Right ventricle myocardium superior (tissue), 1 donor: ENCODE measurements at regions of chr11 and their contacts with region 1.

Region 1: DNA sequence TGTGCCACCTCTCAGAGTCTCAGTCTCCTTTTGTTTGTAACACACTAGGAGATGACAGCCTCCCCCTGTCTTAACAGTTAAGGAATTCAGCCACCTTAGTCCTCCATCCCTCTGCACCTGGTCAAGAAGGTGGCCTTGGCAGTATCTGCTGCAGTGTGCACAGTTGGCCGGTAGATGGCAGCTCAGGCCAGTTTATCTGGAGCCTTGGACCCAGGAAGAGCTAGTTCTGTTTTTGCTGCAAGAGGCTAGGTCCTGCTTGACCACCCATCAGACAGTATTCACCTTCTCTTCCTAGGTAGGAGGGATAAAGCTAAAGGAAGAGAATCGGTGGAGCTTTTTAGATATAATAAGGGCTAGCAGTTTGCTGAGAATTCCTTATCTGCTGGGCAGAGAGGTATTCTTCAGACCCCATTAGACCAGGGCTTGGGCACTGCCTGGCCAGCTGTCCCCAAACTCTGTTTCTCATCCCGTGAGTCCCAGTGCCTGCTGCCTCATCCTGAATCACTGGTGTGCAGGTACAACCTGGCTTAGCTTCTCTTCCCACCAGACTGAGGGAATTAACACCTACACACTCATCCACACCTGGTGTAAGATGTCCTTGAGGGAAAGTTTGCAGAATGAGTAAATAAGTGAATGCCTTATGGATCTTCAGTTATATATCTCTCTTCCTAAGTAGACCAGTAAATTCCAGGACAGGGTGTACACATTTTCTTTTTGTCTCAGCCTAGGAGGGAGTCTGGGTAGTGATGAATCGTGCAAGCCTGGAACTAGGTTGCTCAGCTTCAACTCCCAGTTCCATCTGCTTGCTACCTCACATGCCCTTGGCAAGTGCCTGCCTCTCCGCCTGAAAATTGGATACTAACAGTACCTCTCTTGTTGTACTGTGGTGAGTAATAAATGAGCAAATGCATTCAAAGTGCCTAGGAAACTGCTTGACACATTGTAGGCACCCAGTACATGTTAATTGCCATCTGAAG is 70.8 kb upstream of the NARS2 start:
- DNase-seq: peak; percentile 80
- ATAC-seq: peak; percentile 94

Region 2: DNA sequence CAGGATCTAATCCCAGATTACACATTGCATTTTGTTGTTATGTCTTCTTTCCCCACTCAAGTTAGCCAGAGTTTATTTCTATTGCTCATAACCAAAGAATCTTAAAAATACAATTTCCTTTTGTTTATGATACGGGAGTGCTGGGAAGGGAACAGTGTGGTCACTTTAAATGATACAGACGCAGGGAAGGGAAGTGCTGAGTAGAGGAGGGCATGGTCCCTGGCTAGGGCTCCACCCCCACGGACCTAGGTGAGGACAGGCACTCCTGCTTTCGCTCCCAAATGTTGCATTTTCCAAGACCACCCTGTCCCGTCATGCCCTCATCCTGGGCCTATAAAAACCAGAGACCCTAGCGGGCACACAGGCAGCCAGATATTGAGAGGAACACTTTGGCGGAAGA is 40.2 kb before region 1 on chr11:
- intact Hi-C with region 1: no loop called
- DNase-seq: no peak
- ATAC-seq: no peak

Region 3: DNA sequence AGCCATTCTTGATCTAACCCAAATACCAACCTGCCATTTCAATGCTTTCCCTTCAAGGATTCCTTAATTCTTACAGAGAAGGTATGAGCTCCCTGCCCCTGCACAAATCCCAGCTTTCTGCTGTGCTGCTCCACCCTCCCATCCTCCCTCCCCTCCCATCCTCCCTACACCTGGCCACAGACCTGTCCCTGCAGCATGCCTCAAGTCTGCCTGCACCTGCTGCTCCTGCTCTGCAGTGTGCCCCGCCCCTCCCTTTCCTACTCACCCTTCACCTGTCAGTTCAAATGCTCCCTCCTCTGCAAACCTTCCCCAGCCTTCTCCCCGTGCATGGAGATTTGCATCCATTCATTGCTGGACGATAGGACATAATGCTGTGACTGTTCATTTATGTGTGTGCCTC is 69.0 kb after region 1 on chr11:
- intact Hi-C with region 1: loop called (anchors 5 kb)
- DNase-seq: no peak
- ATAC-seq: no peak

Region 4: DNA sequence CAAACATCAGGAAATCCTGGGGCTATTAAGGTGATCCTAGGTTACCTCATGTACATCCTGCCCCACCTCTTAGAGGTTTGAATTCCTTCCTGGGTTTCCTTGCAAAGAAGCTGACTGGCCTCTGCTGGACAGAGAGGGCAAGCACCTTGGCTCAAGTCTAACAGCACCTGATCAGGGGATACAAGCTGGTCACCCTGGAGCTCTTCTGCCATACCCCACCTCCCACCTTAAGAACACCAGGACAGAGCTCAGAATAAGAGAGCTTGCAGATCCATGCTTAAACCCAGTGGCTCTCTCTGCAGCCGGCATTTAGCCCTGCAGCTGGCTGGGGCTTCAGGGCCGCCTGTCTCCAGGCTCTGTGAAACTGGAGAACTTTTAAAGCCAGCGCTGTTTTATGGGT is 315.7 kb after region 1 on chr11:
- intact Hi-C with region 1: loop called (anchors 5 kb)
- DNase-seq: no peak
- ATAC-seq: peak; percentile 39

Region 5: GRCh38 chr11:79076526-79077115 is 431.1 kb after region 1 on chr11:
- intact Hi-C with region 1: loop called (anchors 2 kb)
- DNase-seq: peak; percentile 69
- ATAC-seq: peak; percentile 59

Region 6: GRCh38 chr11:79493555-79494171 is 848.1 kb after region 1 on chr11:
- intact Hi-C with region 1: loop called (anchors 10 kb)
- DNase-seq: peak; percentile 72
- ATAC-seq: peak; percentile 92